HepG2 (cell line): ENCODE measurements at regions of chr11 and their contacts with region 1.

Region 1: GRCh38 chr11:1917671-1918516 is 1.6 kb upstream of the TNNT3 start:
- DNase-seq: no peak
- ATAC-seq: peak; percentile 73
- H3K4me3 ChIP-seq: no peak overlapping the region
- H3K27ac ChIP-seq: no peak overlapping the region
- H3K4me1 ChIP-seq: no peaks in the 10 kb centered on the region
- H3K27me3 ChIP-seq: peaks cover 21 to 50% of the 10 kb centered on the region in 2 experiments; a peak in 4 of 5 replicates
- CTCF ChIP-seq: peak; percentile 64
- EP300 ChIP-seq: no peak
- POLR2A ChIP-seq: no peak
- RAD21 ChIP-seq: peak; percentile 29; the same call in 1 of the 2 replicates

Region 2: GRCh38 chr11:1889224-1890120 is 28.4 kb before region 1 on chr11:
- CTCF ChIA-PET with region 1: no interaction called
- POLR2A ChIA-PET with region 1: no interaction called
- in situ Hi-C with region 1: no loop called
- intact Hi-C with region 1: loop called (anchors 1 kb)
- DNase-seq: no peak
- ATAC-seq: no peak; the same call in 2 of the 3 replicates
- H3K4me3 ChIP-seq: no peak overlapping the region
- H3K27ac ChIP-seq: no peak overlapping the region
- H3K4me1 ChIP-seq: no peaks in the 10 kb centered on the region
- H3K27me3 ChIP-seq: peaks cover 15 to 55% of the 10 kb centered on the region in 2 experiments
- CTCF ChIP-seq: no peak
- EP300 ChIP-seq: no peak
- POLR2A ChIP-seq: no peak
- RAD21 ChIP-seq: no peak